ENCODE measurements at regions of chr5 and their contacts with region 1.

Region 1: DNA sequence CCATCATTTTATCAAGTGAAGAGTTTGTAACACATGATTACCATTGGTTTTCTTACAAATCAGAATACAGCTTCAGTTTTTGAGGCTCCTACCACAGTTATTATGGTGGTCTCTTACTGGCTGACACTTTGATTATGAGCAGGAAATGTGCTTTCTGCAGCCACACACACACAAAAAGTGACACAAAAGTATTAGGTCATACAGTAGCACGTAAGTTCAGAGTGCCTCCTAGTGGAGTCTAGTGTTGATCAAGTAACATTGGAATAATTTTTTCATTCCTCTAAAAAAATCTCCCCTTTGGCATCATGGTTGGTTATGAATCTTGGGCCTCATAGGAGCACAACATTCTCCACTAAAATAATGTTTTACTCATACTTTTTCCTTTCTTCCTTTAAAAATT is 37.6 kb downstream of the PAM start:
- DNase-seq: peak in 2 of 4 experiments; percentile 2 to 6
- ATAC-seq: no peak
- H3K4me3 ChIP-seq: no peak overlapping the region
- H3K27ac ChIP-seq: no peak overlapping the region
- H3K4me1 ChIP-seq: no peaks in the 10 kb centered on the region
- H3K27me3 ChIP-seq: no peaks in the 10 kb centered on the region
- CTCF ChIP-seq: peak; percentile 5 to 39 (median 14); a peak in 2 of 6 replicates
- EP300 ChIP-seq: no peak
- POLR2A ChIP-seq: no peak
- RAD21 ChIP-seq: peak in 1 of 2 experiments; percentile 49; a peak in 2 of 4 replicates

Region 2: GRCh38 chr5:102583276-102584124 is 209.2 kb before region 1 on chr5:
- CTCF ChIA-PET with region 1: interaction called, 3 read pairs
- POLR2A ChIA-PET with region 1: no interaction called
- in situ Hi-C with region 1: no loop called
- intact Hi-C with region 1: loop called (anchors 5 kb)
- DNase-seq: peak in 3 of 4 experiments; percentile 2 to 9 (median 7)
- ATAC-seq: no peak
- H3K4me3 ChIP-seq: no peak overlapping the region
- H3K27ac ChIP-seq: no peak overlapping the region
- H3K4me1 ChIP-seq: no peaks in the 10 kb centered on the region
- H3K27me3 ChIP-seq: no peaks in the 10 kb centered on the region
- CTCF ChIP-seq: peak; percentile 21 to 48 (median 48); a peak in 3 of 6 replicates
- EP300 ChIP-seq: no peak
- POLR2A ChIP-seq: no peak
- RAD21 ChIP-seq: peak; percentile 48 to 61

Region 3: DNA sequence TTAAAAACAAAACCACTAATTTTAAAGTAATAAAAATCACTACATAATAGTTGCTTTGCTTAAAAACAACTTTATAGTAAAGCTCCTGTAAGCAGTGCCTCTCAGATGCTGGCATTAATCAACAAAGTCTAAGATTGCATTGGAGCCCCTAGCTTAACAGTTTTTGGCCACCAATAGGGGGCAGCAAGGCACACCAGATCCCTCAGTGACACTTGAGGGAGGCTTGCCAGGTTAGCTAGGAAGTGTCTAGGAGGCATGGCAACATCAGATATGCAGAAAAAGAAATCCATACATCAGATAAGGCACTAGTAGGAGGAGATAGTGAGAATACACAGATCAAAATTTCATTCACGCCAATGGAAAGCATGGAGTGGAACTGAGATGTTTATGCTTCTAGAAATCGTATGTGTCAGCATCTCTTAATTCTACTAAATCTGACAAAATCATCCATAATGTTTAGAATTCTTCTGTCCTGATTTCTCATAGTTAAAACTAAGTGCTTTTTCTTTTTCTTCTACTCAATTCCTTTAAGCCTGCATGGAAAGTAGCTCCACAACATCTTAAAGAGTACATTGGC is 111.2 kb before region 1 on chr5:
- CTCF ChIA-PET with region 1: no interaction called
- POLR2A ChIA-PET with region 1: no interaction called
- in situ Hi-C with region 1: no loop called
- intact Hi-C with region 1: loop called (anchors 5 kb)
- DNase-seq: peak; percentile 17 to 67 (median 37)
- ATAC-seq: peak; percentile 91
- H3K4me3 ChIP-seq: no peak overlapping the region
- H3K27ac ChIP-seq: no peak overlapping the region
- H3K4me1 ChIP-seq: no peaks in the 10 kb centered on the region
- H3K27me3 ChIP-seq: no peaks in the 10 kb centered on the region
- CTCF ChIP-seq: peak; percentile 61 to 74 (median 72)
- EP300 ChIP-seq: no peak
- POLR2A ChIP-seq: no peak
- RAD21 ChIP-seq: peak; percentile 63 to 72

Measured in K562 (cell line).